Heart left ventricle (tissue), 16 donors: ENCODE measurements at regions of chr3 and their contacts with region 1.

Region 1: GRCh38 chr3:101573449-101574387 is at the start of gene PCNP:
- DNase-seq: peak; percentile 99
- ATAC-seq: peak; percentile 95 to 98 (median 97)
- H3K4me3 ChIP-seq: peak within 1 kb of the TSS; percentile 71 to 97 (median 90)
- H3K27ac ChIP-seq: peak within 1 kb of the TSS; percentile 84 to 100 (median 97)
- H3K4me1 ChIP-seq: peaks cover 0 to 49% (median 36%) of the 10 kb centered on the region in 12 donors
- H3K27me3 ChIP-seq: no peaks in the 10 kb centered on the region
- CTCF ChIP-seq: peak; percentile 86 to 95 (median 92)
- POLR2A ChIP-seq: peak in 1 of 2 donors; percentile 71
- total RNA-seq, gene PCNP: 49.7 to 141 (median 121) TPM

Region 2: DNA sequence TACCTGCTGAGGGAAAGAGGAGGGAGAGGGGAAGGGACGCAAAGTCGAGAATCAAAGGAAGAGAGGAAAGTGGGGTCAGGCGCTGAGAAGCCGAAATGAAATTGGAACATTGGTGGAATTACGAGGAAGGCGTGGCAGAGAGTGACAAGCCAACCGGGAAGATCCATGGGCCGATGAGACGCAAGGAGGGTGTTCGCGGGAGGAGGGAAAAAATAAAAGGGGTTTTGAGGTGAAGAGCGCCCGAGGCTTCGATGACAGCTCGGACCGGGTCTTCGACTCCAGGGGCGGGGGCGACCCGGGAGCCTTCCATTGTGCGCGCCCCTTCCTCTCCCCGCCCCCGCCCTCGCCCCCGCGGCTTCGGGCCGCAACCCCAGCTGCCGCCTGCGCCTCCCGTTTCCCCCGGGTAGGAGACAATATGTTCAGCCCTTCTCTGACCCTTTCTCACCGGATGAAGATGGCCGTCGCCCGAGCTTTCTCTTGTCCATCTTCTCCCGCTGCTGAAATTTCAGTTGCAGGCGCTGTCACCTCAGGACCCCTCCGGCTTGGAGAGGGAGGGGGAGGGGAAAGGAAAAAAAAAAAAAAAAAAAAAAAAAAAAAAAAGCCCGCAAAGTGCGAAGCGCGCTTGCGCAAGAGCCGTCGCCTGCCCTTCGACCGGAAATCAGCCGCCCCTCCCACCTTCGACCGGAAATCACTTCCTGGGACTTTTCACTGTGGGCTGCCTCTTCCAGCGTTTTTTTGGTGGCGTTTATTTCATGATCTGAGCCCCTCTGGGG is 60.9 kb before region 1 on chr3 and contains the start of gene SENP7:
- intact Hi-C with region 1: loop called in 5 of 10 experiments (anchors 5 to 10 kb)
- DNase-seq: peak; percentile 86 to 93 (median 89)
- ATAC-seq: peak; percentile 81 to 90 (median 88)
- H3K4me3 ChIP-seq: peak within 1 kb of the TSS; percentile 73 to 95 (median 86)
- H3K27ac ChIP-seq: peak within 1 kb of the TSS; percentile 79 to 98 (median 95)
- H3K4me1 ChIP-seq: peaks cover 0 to 18% (median 7%) of the 10 kb centered on the region in 12 donors
- H3K27me3 ChIP-seq: peaks cover 0 to 6% (median 0%) of the 10 kb centered on the region in 9 donors
- CTCF ChIP-seq: no peak
- POLR2A ChIP-seq: no peak
- total RNA-seq, gene SENP7: 6.6 to 12.0 (median 8.5) TPM

Region 3: DNA sequence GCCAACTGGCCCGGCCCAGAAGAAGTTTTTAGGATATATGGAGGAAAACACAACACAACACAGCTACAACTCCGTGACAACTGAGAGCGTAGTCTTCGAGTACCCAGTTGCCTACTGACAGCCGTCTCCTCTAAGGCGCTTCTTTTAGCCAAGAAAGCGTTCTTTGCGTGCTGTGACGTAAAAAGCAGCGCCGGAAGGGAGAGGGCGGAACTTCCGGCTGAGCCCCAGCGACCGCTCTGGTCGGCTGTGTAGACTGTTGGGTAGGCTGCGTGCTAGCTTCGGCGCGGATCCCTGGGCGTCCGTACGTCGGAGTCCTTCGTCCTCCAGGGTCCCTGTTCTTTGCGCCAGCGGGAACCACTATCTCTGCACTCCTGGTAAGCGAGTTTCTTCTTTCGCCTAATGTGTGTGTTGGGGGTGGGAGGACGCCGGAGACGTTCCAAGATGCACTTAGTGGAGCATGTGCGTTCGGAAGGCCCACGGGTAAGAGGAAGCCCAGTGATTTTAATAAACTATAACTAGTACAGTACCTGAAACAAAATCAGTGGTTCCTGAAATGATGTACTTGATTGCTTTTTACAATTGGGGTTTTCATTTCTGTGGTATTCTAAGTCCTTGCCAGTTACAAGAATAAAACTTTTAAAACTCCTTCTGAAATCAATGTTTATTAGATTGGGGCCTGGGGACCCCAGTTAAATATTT is 11.9 kb before region 1 on chr3 and contains the start of gene TRMT10C:
- intact Hi-C with region 1: loop called in 2 of 10 experiments (anchors 1 kb)
- DNase-seq: peak; percentile 89 to 94 (median 92)
- ATAC-seq: peak; percentile 96 to 99 (median 99)
- H3K4me3 ChIP-seq: peak within 1 kb of the TSS; percentile 42 to 93 (median 76)
- H3K27ac ChIP-seq: peak within 1 kb of the TSS; percentile 45 to 93 (median 85)
- H3K4me1 ChIP-seq: peaks cover 0 to 29% (median 15%) of the 10 kb centered on the region in 12 donors
- H3K27me3 ChIP-seq: peaks cover 0 to 22% (median 0%) of the 10 kb centered on the region in 9 donors
- CTCF ChIP-seq: no peak
- POLR2A ChIP-seq: peak in 1 of 2 donors; percentile 78
- total RNA-seq, gene TRMT10C: 24.5 to 27.6 (median 26.4) TPM

Region 4: DNA sequence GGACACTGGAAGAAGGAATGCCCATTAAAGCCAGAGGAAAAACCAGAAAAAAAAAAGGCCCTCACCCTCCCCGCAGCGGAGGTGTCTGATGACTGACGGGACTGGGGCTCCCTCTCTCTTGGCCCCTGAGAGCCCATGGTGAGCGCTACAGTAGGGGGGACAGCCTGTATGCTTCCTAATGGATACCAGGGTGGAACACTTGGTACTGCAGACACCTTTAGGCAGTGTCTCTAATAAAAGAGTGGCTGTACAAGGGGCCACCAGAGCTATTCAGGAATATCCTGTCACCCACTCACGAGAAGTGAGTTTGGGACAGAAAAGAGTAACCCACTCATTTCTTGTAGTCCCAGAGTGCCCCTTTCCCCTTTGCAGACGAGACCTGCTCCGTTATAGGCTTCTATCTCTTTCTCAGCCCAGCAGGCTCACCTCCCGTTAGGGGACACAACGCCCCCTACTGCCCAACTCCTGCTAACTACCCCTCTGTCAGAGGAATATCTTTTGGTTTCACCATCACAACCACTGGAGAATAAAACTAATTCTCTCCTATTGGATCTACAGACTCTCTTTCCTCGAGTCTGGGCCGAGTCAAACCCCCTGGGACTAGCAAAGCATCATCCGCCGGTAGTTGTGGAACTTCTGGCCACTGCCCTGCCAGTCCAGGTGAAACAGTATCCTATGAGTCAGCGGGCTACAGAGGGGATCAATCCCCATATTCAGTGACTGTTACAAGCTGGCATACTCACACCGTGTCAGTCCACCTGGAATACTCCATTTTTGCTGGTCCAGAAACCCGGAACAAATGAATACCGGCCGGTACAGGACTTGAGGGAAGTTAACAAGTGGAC is 62.5 kb after region 1 on chr3:
- intact Hi-C with region 1: loop called in 6 of 10 experiments (anchors 2 to 5 kb)
- DNase-seq: peak in 4 of 5 donors; percentile 45 to 57 (median 54)
- ATAC-seq: peak; percentile 67 to 84 (median 83)
- H3K4me3 ChIP-seq: no peak overlapping the region
- H3K27ac ChIP-seq: no peak overlapping the region
- H3K4me1 ChIP-seq: peaks cover 0 to 7% (median 0%) of the 10 kb centered on the region in 12 donors
- H3K27me3 ChIP-seq: no peaks in the 10 kb centered on the region
- CTCF ChIP-seq: peak; percentile 33 to 70 (median 60)
- POLR2A ChIP-seq: no peak

Region 5: GRCh38 chr3:101676765-101677435 is 103.2 kb after region 1 on chr3 and contains the start of gene ZBTB11:
- intact Hi-C with region 1: loop called in 7 of 10 experiments (anchors 2 to 10 kb)
- DNase-seq: peak; percentile 100
- ATAC-seq: peak; percentile 91 to 96 (median 94)
- H3K4me3 ChIP-seq: peak within 1 kb of the TSS; percentile 76 to 100 (median 90)
- H3K27ac ChIP-seq: peak within 1 kb of the TSS; percentile 88 to 100 (median 96)
- H3K4me1 ChIP-seq: peaks cover 0 to 39% (median 12%) of the 10 kb centered on the region in 12 donors
- H3K27me3 ChIP-seq: no peaks in the 10 kb centered on the region
- CTCF ChIP-seq: peak; percentile 24 to 79 (median 42)
- POLR2A ChIP-seq: peak; percentile 42 to 73
- total RNA-seq, gene ZBTB11: 8.6 to 12.9 (median 10.4) TPM

Region 6: GRCh38 chr3:101685870-101686412 is 112.2 kb after region 1 on chr3:
- intact Hi-C with region 1: loop called in 2 of 10 experiments (anchors 5 kb)
- DNase-seq: no peak
- ATAC-seq: peak; percentile 13 to 37 (median 20)
- H3K4me3 ChIP-seq: peak overlapping the region; percentile 51 to 93 (median 76)
- H3K27ac ChIP-seq: peak overlapping the region; percentile 66 to 97 (median 88)
- H3K4me1 ChIP-seq: peaks cover 4 to 63% (median 27%) of the 10 kb centered on the region in 12 donors
- H3K27me3 ChIP-seq: no peaks in the 10 kb centered on the region
- CTCF ChIP-seq: no peak
- POLR2A ChIP-seq: no peak

Region 7: DNA sequence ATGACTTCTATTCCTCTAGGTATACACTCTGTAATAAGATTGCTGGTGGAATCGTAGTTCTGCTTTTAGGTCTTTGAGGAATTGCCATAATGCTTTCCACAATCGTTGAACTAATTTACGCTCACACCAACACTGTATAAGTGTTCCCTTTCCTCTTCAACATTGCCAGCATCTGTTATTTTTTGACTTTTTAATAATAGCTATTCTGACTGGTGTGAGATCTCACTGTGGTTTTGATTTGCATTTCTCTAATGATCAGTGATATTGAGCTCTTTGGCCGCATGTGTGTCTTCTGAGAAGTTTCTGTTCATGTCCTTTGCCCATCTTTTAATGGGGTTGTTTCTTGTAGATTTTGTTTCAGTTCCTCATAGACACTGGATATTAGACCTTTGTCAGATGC is 218.1 kb after region 1 on chr3:
- intact Hi-C with region 1: no loop called
- DNase-seq: no peak
- ATAC-seq: no peak
- H3K4me3 ChIP-seq: no peak overlapping the region
- H3K27ac ChIP-seq: no peak overlapping the region
- H3K4me1 ChIP-seq: peaks cover 0 to 12% (median 0%) of the 10 kb centered on the region in 12 donors
- H3K27me3 ChIP-seq: no peaks in the 10 kb centered on the region
- CTCF ChIP-seq: no peak
- POLR2A ChIP-seq: no peak